ENCODE measurements at regions of chr1 and their contacts with region 1.

Region 1: DNA sequence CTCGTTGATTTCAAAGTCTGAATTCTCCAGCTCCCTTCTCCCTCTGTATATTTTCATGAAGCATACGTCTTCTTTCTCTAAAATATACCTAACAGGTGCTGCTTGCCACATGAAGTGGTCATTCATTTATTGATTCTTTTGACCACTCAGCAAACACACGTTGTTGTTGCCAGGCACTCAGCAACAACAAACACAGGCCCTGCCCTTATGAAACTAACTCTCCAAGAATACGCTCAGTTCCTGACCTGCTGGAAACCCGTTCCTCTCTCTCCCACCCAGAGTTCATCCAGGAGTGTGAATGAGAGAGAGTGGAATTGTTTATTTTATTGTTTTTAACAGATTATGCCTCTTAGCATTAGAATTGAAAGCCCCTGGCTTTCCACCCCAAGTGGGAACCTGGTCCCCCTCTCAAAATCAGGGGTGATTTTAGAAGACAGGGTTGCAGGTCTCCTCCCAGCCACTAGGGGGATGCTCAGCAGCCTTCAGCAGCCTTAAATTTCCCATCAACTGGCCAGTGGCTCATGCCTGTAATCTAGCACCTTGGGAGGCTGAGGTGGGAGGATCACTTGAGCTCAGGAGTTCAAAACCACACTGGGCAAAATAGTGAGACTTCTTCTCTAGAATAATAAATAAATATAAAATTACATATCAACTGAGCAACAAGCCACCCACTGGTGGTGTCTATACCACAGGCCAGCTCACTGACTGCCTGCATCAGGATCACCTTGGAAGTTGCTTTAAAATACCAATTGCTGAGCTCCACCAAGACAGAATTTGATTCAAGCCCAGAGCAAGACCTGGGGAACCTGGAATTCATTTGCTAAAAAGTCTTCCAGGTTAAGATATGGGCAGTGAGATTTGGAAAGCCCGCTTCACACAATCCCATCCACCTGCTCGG is 181.0 kb upstream of the KLHDC7A start:
- DNase-seq: no peak
- ATAC-seq: peak; percentile 77
- H3K4me3 ChIP-seq: no peak overlapping the region
- H3K27ac ChIP-seq: no peak overlapping the region
- H3K4me1 ChIP-seq: no peaks in the 10 kb centered on the region
- H3K27me3 ChIP-seq: 0 out of 4 replicates have a peak, but pooled peaks cover 0 to 2% of the 10 kb centered on the region in 2 experiments
- CTCF ChIP-seq: peak; percentile 63 to 83 (median 79)
- EP300 ChIP-seq: no peak
- POLR2A ChIP-seq: no peak
- RAD21 ChIP-seq: peak; percentile 44; the same call in 1 of the 2 replicates

Region 2: DNA sequence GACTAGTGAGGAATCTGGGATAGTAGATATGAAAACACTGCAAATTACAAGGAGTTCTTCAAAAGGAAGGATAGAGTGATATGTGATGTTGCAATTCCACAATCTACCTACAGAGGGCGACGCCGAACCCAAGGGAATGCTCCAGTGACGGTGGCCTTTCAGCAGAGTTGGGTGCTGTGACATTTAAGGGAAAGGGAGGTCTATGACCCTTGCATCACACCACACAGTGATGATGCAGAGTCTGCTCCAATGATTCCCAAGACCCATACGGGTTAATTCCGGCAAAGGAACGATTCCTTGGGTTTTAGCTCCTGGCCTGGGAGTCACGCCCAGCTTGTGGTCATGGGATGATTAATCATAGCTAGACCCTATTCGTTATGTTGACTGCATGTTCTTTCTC is 315.1 kb before region 1 on chr1:
- CTCF ChIA-PET with region 1: interaction called, 10 read pairs
- POLR2A ChIA-PET with region 1: no interaction called
- RAD21 ChIA-PET with region 1: no interaction called
- SMC1A ChIA-PET with region 1: no interaction called
- in situ Hi-C with region 1: no loop called
- intact Hi-C with region 1: loop called (anchors 5 kb)
- DNase-seq: no peak
- ATAC-seq: peak; percentile 42; the same call in 1 of the 3 replicates
- H3K4me3 ChIP-seq: no peak overlapping the region
- H3K27ac ChIP-seq: no peak overlapping the region
- H3K4me1 ChIP-seq: no peaks in the 10 kb centered on the region
- H3K27me3 ChIP-seq: no peaks in the 10 kb centered on the region
- CTCF ChIP-seq: peak; percentile 60 to 76 (median 75)
- EP300 ChIP-seq: no peak
- POLR2A ChIP-seq: no peak
- RAD21 ChIP-seq: peak; percentile 23; the same call in 1 of the 2 replicates

Region 3: DNA sequence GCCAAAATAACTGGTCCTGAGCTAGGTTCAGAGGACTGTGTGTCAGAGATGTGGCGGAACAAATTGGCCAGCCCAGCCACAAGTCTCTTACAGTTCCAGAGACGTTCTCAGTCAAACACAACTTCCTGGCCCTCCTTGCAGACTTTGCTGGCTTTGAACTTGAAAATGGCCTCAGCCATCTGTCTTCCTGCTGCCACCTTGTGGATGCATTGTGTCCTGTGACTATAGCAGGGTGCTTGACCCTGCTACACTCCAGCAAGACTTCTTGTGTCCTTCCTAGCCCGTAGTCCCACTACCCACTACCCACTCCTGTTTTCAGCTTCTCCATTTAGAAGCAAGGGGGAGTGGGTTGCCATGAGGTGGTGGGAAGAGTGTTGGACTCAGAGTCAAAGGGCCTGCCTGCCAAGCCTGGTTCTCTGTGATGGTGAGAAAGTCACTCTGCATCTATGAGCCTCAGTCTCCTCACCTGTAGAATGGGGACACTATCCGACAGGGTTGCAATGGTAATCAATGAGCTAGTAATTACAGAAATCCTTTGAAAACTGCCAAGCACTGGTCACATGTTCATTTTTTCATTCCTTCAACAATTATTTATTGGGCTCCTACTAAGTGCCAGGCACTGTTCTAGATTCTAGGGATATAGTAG is 82.2 kb before region 1 on chr1:
- CTCF ChIA-PET with region 1: interaction called, 4 read pairs
- POLR2A ChIA-PET with region 1: no interaction called
- RAD21 ChIA-PET with region 1: no interaction called
- SMC1A ChIA-PET with region 1: no interaction called
- in situ Hi-C with region 1: no loop called
- intact Hi-C with region 1: loop called (anchors 5 kb)
- DNase-seq: no peak
- ATAC-seq: peak; percentile 67
- H3K4me3 ChIP-seq: no peak overlapping the region
- H3K27ac ChIP-seq: no peak overlapping the region
- H3K4me1 ChIP-seq: no peaks in the 10 kb centered on the region
- H3K27me3 ChIP-seq: no peaks in the 10 kb centered on the region; a peak in 1 of 4 replicates
- CTCF ChIP-seq: peak; percentile 44 to 55 (median 48)
- EP300 ChIP-seq: no peak
- POLR2A ChIP-seq: no peak
- RAD21 ChIP-seq: peak; percentile 41; the same call in 1 of the 2 replicates

Region 4: DNA sequence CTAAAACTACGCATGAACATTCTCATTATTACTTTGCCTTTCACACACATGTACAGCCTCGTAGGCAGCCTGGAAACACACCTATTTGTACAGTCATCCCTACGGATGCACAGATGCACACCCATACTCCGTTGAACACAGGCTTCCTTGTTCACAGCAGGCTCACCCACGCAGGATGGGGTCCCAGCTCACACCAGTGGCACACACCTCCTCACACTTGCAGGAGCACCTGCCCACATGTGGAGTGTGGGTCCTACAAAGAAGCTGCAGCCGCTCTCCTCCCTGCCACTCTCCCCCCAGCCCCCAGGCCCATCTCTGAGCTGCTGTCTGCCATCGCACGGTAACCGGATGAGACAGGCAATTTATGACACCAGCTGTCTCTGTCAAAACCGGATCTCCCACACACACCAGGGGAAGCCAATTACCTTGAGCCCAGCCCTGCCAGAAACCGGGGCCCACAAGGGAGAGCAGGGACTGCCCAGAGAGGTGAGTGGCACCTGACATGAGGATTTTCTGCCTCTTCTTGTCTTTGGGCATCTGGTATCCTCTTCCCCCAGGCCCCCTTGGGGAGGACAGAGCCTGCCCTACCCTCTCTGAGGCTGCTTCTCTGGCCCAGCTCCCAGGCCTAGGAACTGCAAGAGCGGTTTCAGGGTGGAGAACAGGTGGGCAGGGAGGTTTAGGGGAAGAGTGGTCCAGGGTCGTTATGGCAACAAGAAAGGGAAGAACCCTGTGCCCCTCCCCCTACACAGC is 16.7 kb before region 1 on chr1:
- CTCF ChIA-PET with region 1: interaction called, 31 read pairs
- POLR2A ChIA-PET with region 1: interaction called, 4 read pairs
- RAD21 ChIA-PET with region 1: interaction called, 7 read pairs
- SMC1A ChIA-PET with region 1: interaction called, 25 read pairs
- in situ Hi-C with region 1: no loop called
- intact Hi-C with region 1: no loop called
- DNase-seq: peak; percentile 34
- ATAC-seq: peak; percentile 65
- H3K4me3 ChIP-seq: 0 out of 2 replicates have a peak overlapping the region, but pooled peaks have one; percentile 13
- H3K27ac ChIP-seq: peak overlapping the region; percentile 72
- H3K4me1 ChIP-seq: peaks cover 41% of the 10 kb centered on the region
- H3K27me3 ChIP-seq: no peaks in the 10 kb centered on the region
- CTCF ChIP-seq: no peak
- EP300 ChIP-seq: no peak
- POLR2A ChIP-seq: no peak
- RAD21 ChIP-seq: no peak